ENCODE measurements at regions of chr2 and their contacts with region 1.

Region 1: DNA sequence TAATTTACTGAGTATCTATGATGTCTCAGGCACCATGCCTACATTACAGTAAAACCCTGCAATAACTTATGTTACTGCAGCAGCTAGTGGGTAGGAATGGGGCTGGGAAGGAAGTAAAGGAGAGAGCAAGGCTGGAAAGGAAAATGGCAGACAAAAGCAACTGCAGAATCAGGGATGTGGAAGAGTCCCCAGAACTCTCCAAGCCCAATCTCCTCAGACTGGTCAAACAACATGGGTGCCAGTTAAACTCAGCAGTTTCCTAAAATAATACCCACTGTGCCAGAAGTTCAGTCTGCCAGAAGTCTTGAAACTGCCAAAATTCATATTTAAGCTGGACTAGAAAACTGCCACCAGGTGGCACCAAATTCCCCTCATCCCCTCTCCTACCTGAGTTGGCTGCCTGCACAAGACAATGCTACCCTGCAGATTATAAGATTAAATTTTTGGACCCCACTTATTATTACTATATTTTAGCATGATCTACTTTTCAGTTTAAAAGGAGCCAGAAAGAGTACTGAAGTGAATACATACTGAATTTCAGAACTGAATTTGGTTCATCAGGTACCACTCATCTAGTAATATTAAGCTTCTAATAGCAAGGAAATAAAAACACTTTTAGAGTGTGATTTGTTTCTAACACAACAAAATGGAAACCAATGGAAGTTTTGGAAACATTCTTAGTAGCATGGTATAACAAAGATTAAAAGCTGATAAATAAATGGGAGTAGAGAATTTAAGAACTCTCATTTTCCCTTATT is 86.8 kb upstream of the DNER start:
- DNase-seq: peak; percentile 73
- H3K4me3 ChIP-seq: no peak overlapping the region
- H3K27ac ChIP-seq: no peak overlapping the region
- H3K4me1 ChIP-seq: peaks cover under 1% of the 10 kb centered on the region
- H3K27me3 ChIP-seq: no peaks in the 10 kb centered on the region
- CTCF ChIP-seq: peak; percentile 69 to 86 (median 73)
- POLR2A ChIP-seq: no peak

Region 2: DNA sequence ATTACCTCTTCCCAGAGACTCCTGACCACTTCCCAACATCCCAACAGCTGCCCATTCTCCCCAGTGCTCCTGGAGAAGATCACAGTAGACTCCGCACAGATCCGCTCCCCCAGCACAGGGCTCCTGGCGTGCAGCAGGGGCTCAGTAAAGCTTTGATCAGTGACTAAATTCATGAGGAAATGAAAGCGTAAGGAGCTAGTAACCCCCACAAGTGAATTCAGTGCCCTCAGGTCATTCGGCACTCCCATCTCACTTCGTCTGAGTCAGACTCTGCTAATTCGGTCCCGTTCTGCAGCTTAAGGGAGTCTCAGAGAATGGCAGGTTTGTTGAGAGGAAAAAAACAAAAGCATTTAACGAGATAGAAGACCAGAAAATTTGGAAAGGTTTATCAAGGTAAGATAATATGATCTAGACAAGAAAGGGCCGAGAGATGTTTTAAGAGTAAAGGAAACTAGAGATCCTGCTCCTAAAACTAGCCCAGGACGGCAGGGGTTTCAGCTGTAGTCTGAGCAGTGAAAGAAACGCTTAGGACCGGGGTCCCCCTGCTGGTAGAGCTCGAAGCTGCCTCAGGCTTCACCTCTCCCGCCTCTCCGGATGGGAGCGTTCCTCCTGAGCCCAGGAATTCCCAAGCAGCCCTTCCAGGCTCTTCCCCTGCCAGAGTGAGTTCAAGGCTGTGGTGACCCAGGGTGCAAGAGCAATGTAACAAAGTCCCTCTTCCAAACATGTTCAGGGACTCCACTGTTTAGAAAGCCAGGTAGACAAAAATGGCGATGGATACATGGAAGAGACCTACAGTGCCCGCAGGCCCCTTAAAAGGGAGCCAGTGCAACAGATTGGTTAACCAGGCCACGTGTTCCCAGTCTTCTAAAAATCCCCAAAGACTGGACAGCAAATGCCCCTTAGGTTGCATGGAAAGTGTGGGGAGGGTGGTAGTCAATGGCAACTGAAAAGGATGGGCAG is 214.2 kb before region 1 on chr2:
- intact Hi-C with region 1: no loop called
- DNase-seq: peak; percentile 67
- H3K4me3 ChIP-seq: no peak overlapping the region
- H3K27ac ChIP-seq: peak overlapping the region in 1 of 2 donors; percentile 43
- H3K4me1 ChIP-seq: no peaks in the 10 kb centered on the region
- H3K27me3 ChIP-seq: no peaks in the 10 kb centered on the region
- CTCF ChIP-seq: peak; percentile 69 to 84 (median 81)
- POLR2A ChIP-seq: no peak

Region 3: DNA sequence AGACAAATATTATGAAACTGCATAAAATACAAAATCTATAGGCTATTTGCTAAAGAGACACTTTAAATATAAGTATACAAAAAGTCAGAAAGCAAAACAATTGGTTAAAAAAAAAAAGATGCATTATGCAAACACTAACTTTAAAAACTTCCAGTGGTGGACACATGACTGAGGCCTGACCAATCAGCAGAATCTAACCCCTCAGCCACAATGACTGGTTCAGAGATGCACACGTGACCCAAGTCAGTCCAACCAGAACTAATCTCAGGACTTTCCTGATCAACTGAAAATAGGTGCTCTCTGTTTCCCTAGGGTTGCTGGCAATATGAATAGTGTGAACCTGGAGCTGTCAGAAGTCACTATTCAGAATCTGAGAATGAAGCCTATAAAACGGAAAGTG is 109.5 kb before region 1 on chr2:
- intact Hi-C with region 1: no loop called
- DNase-seq: no peak
- H3K4me3 ChIP-seq: no peak overlapping the region
- H3K27ac ChIP-seq: no peak overlapping the region
- H3K4me1 ChIP-seq: no peaks in the 10 kb centered on the region
- H3K27me3 ChIP-seq: no peaks in the 10 kb centered on the region
- CTCF ChIP-seq: no peak
- POLR2A ChIP-seq: no peak

Region 4: GRCh38 chr2:229703909-229704630 is 97.1 kb before region 1 on chr2:
- intact Hi-C with region 1: no loop called
- DNase-seq: no peak
- H3K4me3 ChIP-seq: no peak overlapping the region
- H3K27ac ChIP-seq: no peak overlapping the region
- H3K4me1 ChIP-seq: no peaks in the 10 kb centered on the region
- H3K27me3 ChIP-seq: no peaks in the 10 kb centered on the region
- CTCF ChIP-seq: no peak
- POLR2A ChIP-seq: no peak

Region 5: DNA sequence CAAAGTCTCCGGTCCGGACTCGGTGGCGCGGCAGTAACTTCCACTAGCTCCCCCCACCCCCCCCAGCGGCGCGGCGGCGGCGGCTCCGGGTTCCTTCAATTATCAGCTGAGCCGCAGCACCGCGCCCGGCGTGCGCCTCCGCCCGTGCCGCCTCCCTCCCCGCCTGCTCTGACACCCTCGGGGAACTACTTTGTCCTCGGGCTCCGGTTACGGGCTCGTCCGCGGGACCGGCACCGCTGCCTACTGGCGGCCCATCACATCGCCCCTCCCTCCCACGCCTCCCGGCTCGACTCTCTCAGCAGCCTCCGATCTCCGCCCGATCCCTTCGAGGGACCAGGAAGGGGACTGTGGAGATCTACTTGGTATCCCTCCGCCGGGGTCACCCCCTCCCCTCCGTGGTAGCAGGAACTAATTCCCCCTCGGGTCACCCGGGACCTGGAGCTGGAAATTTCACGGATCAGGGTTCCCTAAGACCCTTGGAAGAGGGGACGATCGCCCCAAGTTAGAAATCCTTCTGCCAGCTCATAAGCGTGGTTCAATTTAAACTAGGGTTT is 120.8 kb after region 1 on chr2 and contains the start of gene TRIP12:
- intact Hi-C with region 1: loop called (anchors 5 kb)
- DNase-seq: peak; percentile 91
- H3K4me3 ChIP-seq: peak within 1 kb of the TSS; percentile 91 to 95
- H3K27ac ChIP-seq: peak within 1 kb of the TSS; percentile 97 to 98
- H3K4me1 ChIP-seq: no peaks in the 10 kb centered on the region
- H3K27me3 ChIP-seq: no peaks in the 10 kb centered on the region
- CTCF ChIP-seq: peak in 1 of 4 experiments; percentile 18
- POLR2A ChIP-seq: peak; percentile 52
- total RNA-seq, gene TRIP12: 182 to 289 TPM

Region 6: GRCh38 chr2:230068016-230068650 is 267.0 kb after region 1 on chr2:
- intact Hi-C with region 1: loop called (anchors 5 kb)
- DNase-seq: peak; percentile 44
- H3K4me3 ChIP-seq: peak overlapping the region; percentile 47 to 66
- H3K27ac ChIP-seq: peak overlapping the region; percentile 81 to 88
- H3K4me1 ChIP-seq: no peaks in the 10 kb centered on the region
- H3K27me3 ChIP-seq: no peaks in the 10 kb centered on the region
- CTCF ChIP-seq: peak in 2 of 4 experiments; percentile 25 to 38
- POLR2A ChIP-seq: no peak

Region 7: GRCh38 chr2:230160112-230160660 is 359.0 kb after region 1 on chr2:
- intact Hi-C with region 1: loop called (anchors 10 kb)
- DNase-seq: no peak
- H3K4me3 ChIP-seq: no peak overlapping the region
- H3K27ac ChIP-seq: no peak overlapping the region
- H3K4me1 ChIP-seq: no peaks in the 10 kb centered on the region
- H3K27me3 ChIP-seq: no peaks in the 10 kb centered on the region
- CTCF ChIP-seq: peak; percentile 64 to 75 (median 67)
- POLR2A ChIP-seq: no peak

Region 8: DNA sequence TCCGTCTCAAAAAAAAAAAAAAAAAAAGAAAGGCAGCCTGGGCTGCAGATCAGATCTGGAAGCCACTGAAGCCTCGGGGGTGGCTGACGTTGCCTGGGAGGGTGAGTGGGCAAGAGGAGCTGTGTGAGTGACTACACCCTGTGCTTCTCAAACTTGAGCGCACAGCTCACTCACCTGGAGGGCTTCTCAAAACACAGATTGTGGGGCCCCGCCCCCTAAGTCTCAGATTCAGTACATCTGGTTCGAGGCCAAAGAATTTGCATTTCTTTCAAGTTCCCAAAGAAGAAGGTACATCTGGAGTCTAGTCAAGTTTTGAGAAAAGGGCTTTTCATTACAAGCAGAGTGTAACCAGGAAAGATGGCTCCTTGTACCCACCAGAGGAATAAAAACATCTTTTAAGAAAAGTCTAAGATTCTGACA is 813.7 kb after region 1 on chr2:
- intact Hi-C with region 1: loop called (anchors 10 kb)
- DNase-seq: no peak
- H3K4me3 ChIP-seq: no peak overlapping the region
- H3K27ac ChIP-seq: no peak overlapping the region
- H3K4me1 ChIP-seq: no peaks in the 10 kb centered on the region
- H3K27me3 ChIP-seq: no peaks in the 10 kb centered on the region
- CTCF ChIP-seq: no peak
- POLR2A ChIP-seq: no peak